H1 (cell line): ENCODE measurements at regions of chr7 and their contacts with region 1.

Region 1: GRCh38 chr7:11193131-11193811 is 219.6 kb downstream of the PHF14 start:
- DNase-seq: peak; percentile 31 to 58
- H3K4me3 ChIP-seq: peak overlapping the region; percentile 34 to 61 (median 51)
- H3K27ac ChIP-seq: peak overlapping the region; percentile 27
- H3K4me1 ChIP-seq: peaks cover 6 to 17% (median 15%) of the 10 kb centered on the region in 4 experiments
- H3K27me3 ChIP-seq: peaks cover 0 to 7% (median 4%) of the 10 kb centered on the region in 4 experiments; a peak in 4 of 7 replicates
- CTCF ChIP-seq: no peak
- EP300 ChIP-seq: no peak
- POLR2A ChIP-seq: peak in 1 of 2 experiments; percentile 60; a peak in 1 of 3 replicates
- RAD21 ChIP-seq: no peak

Region 2: DNA sequence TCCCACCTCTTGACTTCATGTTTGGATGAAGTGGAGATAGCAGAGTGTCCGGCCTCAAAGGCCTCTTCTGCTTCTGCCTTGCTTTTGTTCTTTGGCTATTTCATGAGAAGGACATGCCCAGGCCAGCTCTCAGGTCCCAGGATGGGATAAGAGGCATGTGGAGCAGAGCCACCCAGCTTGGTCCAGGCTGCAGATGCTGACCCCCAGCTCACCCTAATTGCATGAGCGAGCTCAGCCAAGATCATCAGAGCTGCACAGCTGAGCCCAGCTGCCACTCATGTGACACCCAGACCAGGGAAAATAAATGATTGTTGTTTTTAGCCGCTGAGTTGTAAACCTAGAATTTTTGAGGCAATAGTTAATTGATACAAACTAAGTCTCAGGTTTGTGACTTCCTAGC is 10.4 kb after region 1 on chr7:
- CTCF ChIA-PET with region 1: interaction called, 13 read pairs
- POLR2A ChIA-PET with region 1: interaction called, 5 read pairs
- DNase-seq: no peak
- H3K4me3 ChIP-seq: no peak overlapping the region
- H3K27ac ChIP-seq: no peak overlapping the region
- H3K4me1 ChIP-seq: no peaks in the 10 kb centered on the region
- H3K27me3 ChIP-seq: no peaks in the 10 kb centered on the region
- CTCF ChIP-seq: no peak
- EP300 ChIP-seq: no peak
- POLR2A ChIP-seq: no peak
- RAD21 ChIP-seq: no peak

Region 3: GRCh38 chr7:11613292-11613930 is 420.1 kb after region 1 on chr7:
- CTCF ChIA-PET with region 1: no interaction called
- POLR2A ChIA-PET with region 1: no interaction called
- DNase-seq: no peak
- H3K4me3 ChIP-seq: no peak overlapping the region
- H3K27ac ChIP-seq: no peak overlapping the region
- H3K4me1 ChIP-seq: peaks cover 0 to 7% (median 2%) of the 10 kb centered on the region in 4 experiments; a peak in 2 of 7 replicates
- H3K27me3 ChIP-seq: no peaks in the 10 kb centered on the region
- CTCF ChIP-seq: peak in 1 of 3 experiments; percentile 57; a peak in 2 of 4 replicates
- EP300 ChIP-seq: no peak
- POLR2A ChIP-seq: no peak
- RAD21 ChIP-seq: peak; percentile 29 to 31; a peak in 2 of 4 replicates